Body of pancreas (tissue), 4 donors: ENCODE measurements at regions of chr3 and their contacts with region 1.

Region 1: GRCh38 chr3:150495563-150496168 is 50.6 kb downstream of the SERP1 start:
- DNase-seq: no peak
- ATAC-seq: no peak
- H3K4me3 ChIP-seq: no peak overlapping the region
- H3K27ac ChIP-seq: no peak overlapping the region
- H3K4me1 ChIP-seq: no peaks in the 10 kb centered on the region
- H3K27me3 ChIP-seq: no peaks in the 10 kb centered on the region
- CTCF ChIP-seq: peak; percentile 33 to 92 (median 81)
- POLR2A ChIP-seq: no peak

Region 2: GRCh38 chr3:150286390-150287147 is 209.1 kb before region 1 on chr3:
- intact Hi-C with region 1: loop called (anchors 5 kb)
- DNase-seq: peak in 3 of 4 donors; percentile 8 to 33 (median 20)
- ATAC-seq: peak; percentile 97
- H3K4me3 ChIP-seq: no peak overlapping the region
- H3K27ac ChIP-seq: no peak overlapping the region
- H3K4me1 ChIP-seq: peaks cover 5% of the 10 kb centered on the region
- H3K27me3 ChIP-seq: no peaks in the 10 kb centered on the region
- CTCF ChIP-seq: peak in 6 of 7 experiments; percentile 58 to 82 (median 75)
- POLR2A ChIP-seq: no peak